Activated CD8-positive, alpha-beta memory T cell treated with anti-CD3 and anti-CD28 coated beads, Interleukin-2, amount 10 ng/mL, durations not matched to agents 7 days and 5 days (primary cell): ENCODE measurements at regions of chr11 and their contacts with region 1.

Region 1: DNA sequence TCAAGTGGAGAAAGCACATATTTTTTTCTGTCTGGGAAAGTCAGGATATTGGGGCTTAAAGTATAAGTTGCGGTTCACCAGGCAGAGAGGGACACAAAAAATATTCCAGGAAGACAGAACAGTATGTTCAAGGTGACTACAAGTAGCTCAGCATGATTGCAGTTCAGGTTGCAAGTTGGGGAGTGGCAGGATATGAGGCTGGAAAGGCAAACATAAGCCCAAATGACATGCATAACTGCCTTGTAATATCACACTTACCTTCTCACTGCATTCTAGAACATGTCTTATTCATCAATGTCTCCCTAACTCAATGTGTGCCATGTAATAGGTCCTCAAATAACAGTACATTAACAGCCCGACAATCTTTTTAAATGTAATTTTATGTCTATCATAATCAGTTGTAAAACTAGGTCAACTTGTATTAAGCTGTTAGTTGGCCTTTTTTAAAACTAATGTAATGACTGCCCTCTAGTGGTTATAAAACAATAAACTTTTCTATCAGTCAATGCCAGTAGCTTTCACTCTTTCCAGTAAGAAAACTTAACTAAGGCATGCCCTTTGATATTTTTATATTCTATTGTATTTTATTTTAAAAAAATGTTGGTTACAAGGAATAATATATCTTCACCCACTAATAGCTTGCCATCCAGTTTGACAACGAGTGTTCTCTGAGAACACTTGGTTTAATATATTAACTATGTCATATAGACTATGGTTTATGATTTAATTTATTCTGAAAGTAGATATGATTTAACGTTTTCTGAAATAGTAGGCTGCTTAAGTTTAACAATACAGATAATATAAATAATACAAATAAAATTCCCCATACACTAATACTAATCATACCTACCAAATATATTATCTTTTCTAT is 39.4 kb upstream of the CFAP300 start:
- DNase-seq: no peak
- ATAC-seq: no peak
- H3K4me3 Mint-ChIP-seq: no peak overlapping the region
- H3K27ac Mint-ChIP-seq: no peak overlapping the region
- H3K4me1 Mint-ChIP-seq: peaks cover 6% of the 10 kb centered on the region
- H3K27me3 Mint-ChIP-seq: peaks cover 26% of the 10 kb centered on the region

Region 2: GRCh38 chr11:101860696-101861427 is 146.9 kb before region 1 on chr11:
- CTCF ChIA-PET with region 1: interaction called, 57 read pairs
- DNase-seq: no peak
- ATAC-seq: peak; percentile 73
- H3K4me3 Mint-ChIP-seq: no peak overlapping the region
- H3K27ac Mint-ChIP-seq: no peak overlapping the region
- H3K4me1 Mint-ChIP-seq: peaks cover 1% of the 10 kb centered on the region
- H3K27me3 Mint-ChIP-seq: no peaks in the 10 kb centered on the region

Region 3: DNA sequence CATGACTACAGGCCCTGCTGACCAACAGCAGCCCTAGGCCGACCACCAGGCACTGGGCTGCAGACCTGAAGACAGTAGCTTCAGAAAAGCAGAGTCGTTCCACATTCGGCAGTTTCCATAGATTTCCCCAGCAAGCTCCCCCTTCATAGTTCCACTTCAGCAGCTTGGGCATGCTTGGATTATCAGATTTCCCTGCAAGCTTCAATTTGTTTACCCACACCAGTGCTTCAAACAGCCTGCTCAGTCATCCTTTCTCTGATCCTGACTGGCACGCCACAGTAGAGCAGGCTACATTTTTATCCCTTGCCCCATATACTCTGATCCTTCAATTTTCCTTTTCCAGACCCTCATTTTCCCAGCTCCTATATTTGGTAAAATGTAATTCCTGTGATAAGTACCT is 11.7 kb before region 1 on chr11:
- CTCF ChIA-PET with region 1: interaction called, 12 read pairs
- DNase-seq: no peak
- ATAC-seq: no peak
- H3K4me3 Mint-ChIP-seq: no peak overlapping the region
- H3K27ac Mint-ChIP-seq: no peak overlapping the region
- H3K4me1 Mint-ChIP-seq: no peaks in the 10 kb centered on the region
- H3K27me3 Mint-ChIP-seq: no peaks in the 10 kb centered on the region

Region 4: GRCh38 chr11:102097186-102097585 is 89.4 kb after region 1 on chr11:
- CTCF ChIA-PET with region 1: no interaction called
- DNase-seq: no peak
- ATAC-seq: no peak
- H3K4me3 Mint-ChIP-seq: no peak overlapping the region
- H3K27ac Mint-ChIP-seq: no peak overlapping the region
- H3K4me1 Mint-ChIP-seq: no peaks in the 10 kb centered on the region
- H3K27me3 Mint-ChIP-seq: no peaks in the 10 kb centered on the region